ENCODE measurements at regions of chrX and their contacts with region 1.

Region 1: DNA sequence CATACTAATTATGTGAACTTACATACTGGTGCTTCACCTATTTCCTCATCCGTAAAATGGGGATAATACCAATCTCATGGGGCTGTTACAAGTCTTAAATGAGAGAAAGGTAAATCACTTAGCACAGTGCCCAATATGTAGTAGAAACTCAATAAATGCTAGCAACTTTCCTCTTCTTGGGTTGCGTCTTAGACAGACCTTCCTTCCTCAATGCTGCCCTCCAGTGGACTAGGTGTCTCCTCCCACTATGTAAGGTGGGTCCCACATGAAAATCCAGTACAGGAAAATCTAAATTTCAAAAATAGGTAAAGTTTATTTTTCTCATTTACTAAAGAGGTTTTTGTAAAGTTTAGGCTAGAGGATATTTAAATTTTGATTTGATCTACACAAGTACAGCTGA is 20.6 kb downstream of the ZDHHC9 start:
- DNase-seq: peak; percentile 24
- H3K4me3 Mint-ChIP-seq: no peak overlapping the region
- H3K27ac Mint-ChIP-seq: no peak overlapping the region
- H3K4me1 Mint-ChIP-seq: peaks cover 18% of the 10 kb centered on the region
- H3K27me3 Mint-ChIP-seq: no peaks in the 10 kb centered on the region

Region 2: GRCh38 chrX:129637217-129638109 is 185.7 kb before region 1 on chrX:
- intact Hi-C with region 1: loop called (anchors 1 kb)
- DNase-seq: peak; percentile 48
- H3K4me3 Mint-ChIP-seq: no peak overlapping the region
- H3K27ac Mint-ChIP-seq: no peak overlapping the region
- H3K4me1 Mint-ChIP-seq: no peaks in the 10 kb centered on the region
- H3K27me3 Mint-ChIP-seq: no peaks in the 10 kb centered on the region

Region 3: GRCh38 chrX:129654419-129655165 is 168.5 kb before region 1 on chrX and contains the start of gene APLN:
- intact Hi-C with region 1: loop called (anchors 1 kb)
- DNase-seq: no peak
- H3K4me3 Mint-ChIP-seq: peak within 1 kb of the TSS; percentile 57
- H3K27ac Mint-ChIP-seq: no peak within 1 kb of the TSS
- H3K4me1 Mint-ChIP-seq: peaks cover 6% of the 10 kb centered on the region
- H3K27me3 Mint-ChIP-seq: peaks cover 16% of the 10 kb centered on the region
- total RNA-seq, gene APLN: 0.12 and 0.26 TPM in 2 replicates

Measured in activated T-helper 1 cell treated with anti-CD3 and anti-CD28 coated beads, Interleukin-12 subunit alpha, Interleukin-12 subunit beta, Interleukin-2, Interleukin-4 antibody, amounts not matched to agents 30 ng/mL and 10 ng/mL and 1 ng/mL, durations not matched to agents 14 hours and 24 hours and 36 hours (primary cell).